ENCODE measurements at regions of chr1 and their contacts with region 1.

Region 1: DNA sequence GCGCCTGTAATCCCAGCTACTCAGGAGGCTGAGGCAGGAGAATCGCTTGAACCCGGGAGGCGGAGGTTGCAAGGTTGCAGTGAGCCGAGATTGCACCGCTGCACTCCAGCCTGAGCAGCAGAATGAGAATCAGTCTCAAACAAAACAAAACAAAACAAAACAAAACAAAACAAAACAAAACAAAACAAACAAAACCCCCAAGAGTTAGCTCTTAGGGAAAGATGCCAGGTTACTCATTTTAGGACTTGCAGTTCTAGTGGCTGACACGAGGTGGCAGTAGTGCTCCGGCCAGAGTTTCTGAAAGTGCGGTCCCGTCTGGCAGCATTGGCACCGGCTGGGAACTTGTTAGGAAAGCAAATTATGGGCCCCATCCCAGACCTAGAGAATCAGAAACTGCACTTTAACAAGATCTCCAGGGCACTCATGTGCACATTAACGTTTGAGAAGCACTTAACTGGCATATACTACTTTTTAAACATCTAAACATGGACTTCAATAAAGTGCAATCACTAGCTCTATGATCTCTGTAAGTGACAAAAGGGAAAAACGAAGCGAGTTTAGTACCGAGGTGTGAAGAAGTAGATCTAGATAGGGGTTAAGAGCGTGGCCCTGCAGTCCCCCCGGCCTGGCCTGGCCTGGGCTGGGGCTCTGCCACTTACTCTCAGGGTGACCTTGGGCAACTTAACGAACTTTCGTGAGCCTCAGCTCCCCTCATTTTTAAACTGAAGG is 41.9 kb upstream of the TNFRSF1B start:
- DNase-seq: peak; percentile 69 to 91 (median 80)
- H3K4me3 ChIP-seq: no peak overlapping the region
- H3K27ac ChIP-seq: peak overlapping the region in 1 of 5 donors; percentile 21
- H3K4me1 ChIP-seq: peaks cover 6 to 13% of the 10 kb centered on the region in 2 donors
- H3K27me3 ChIP-seq: no peaks in the 10 kb centered on the region
- CTCF ChIP-seq: peak; percentile 95 to 99 (median 98)
- POLR2A ChIP-seq: no peak

Region 2: GRCh38 chr1:12208764-12209494 is 84.1 kb after region 1 on chr1:
- intact Hi-C with region 1: loop called (anchors 2 kb)
- DNase-seq: peak; percentile 83 to 96 (median 86)
- H3K4me3 ChIP-seq: no peak overlapping the region
- H3K27ac ChIP-seq: no peak overlapping the region
- H3K4me1 ChIP-seq: no peaks in the 10 kb centered on the region
- H3K27me3 ChIP-seq: no peaks in the 10 kb centered on the region
- CTCF ChIP-seq: peak; percentile 92 to 98 (median 96)
- POLR2A ChIP-seq: no peak

Measured in adrenal gland (tissue), 19 donors.